ENCODE measurements at regions of chr4 and their contacts with region 1.

Region 1: DNA sequence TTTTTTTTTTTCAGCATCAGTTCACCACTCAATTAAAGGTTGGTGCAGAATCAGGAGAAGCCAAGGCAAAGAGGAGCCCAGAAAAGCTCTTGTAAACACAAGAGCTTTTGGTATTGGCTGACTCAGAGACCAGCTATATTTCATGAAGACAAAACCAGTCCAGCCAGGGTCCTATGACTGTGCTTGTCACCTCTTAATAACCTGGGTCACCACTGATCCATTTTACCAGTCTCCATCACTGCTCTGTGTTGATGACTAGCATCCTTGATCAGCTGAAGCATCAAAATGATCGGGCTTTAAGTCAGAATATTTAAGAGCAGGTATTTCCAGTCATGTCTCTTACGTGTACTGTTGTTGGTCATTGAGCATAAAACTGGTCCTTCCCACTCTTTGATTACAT is 237.9 kb downstream of the PACRGL start:
- DNase-seq: no peak
- ATAC-seq: no peak
- H3K4me3 Mint-ChIP-seq: no peak overlapping the region
- H3K27ac Mint-ChIP-seq: no peak overlapping the region
- H3K4me1 Mint-ChIP-seq: no peaks in the 10 kb centered on the region
- H3K27me3 Mint-ChIP-seq: no peaks in the 10 kb centered on the region
- CTCF ChIP-seq: no peak

Region 2: GRCh38 chr4:20916106-20916505 is 22.1 kb before region 1 on chr4:
- CTCF ChIA-PET with region 1: no interaction called
- POLR2A ChIA-PET with region 1: no interaction called
- DNase-seq: no peak
- ATAC-seq: no peak
- H3K4me3 Mint-ChIP-seq: no peak overlapping the region
- H3K27ac Mint-ChIP-seq: no peak overlapping the region
- H3K4me1 Mint-ChIP-seq: no peaks in the 10 kb centered on the region
- H3K27me3 Mint-ChIP-seq: no peaks in the 10 kb centered on the region
- CTCF ChIP-seq: no peak

Region 3: DNA sequence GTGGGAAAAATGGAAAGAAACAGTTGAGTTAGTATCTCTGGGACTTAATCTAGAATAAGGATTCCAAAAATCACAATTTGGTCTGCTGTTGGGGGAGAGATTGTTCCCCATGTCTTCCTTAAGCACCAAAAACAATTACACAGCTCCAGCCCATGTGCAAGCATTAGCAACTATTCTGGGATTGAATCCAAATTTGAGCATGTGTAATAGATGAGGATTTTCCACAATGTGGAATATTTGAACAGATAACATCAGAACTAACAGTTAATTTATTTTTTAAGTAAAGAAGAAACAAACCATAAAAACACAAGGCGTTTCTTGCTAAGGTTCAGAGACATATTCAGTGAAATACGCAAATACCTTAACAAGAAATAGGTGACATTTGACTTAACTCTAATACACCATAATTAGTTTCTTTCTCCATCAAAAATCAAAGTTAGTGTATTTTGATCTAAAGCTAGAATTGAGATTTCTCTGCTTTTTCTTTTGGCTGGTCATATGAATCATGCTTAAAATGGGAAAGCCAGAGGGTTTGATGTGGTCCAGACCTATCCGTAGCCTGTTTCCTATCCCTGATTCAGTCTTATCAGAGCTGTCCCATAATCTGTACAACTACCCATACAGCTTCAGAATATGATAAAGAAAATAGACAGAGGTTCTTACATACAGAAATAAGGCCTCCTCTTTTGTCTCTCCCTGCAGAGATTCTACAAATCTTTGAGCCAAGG is 175.5 kb after region 1 on chr4:
- CTCF ChIA-PET with region 1: no interaction called
- POLR2A ChIA-PET with region 1: interaction called, 12 read pairs
- DNase-seq: no peak
- ATAC-seq: no peak
- H3K4me3 Mint-ChIP-seq: no peak overlapping the region
- H3K27ac Mint-ChIP-seq: no peak overlapping the region
- H3K4me1 Mint-ChIP-seq: peaks cover 24% of the 10 kb centered on the region
- H3K27me3 Mint-ChIP-seq: no peaks in the 10 kb centered on the region
- CTCF ChIP-seq: no peak

Measured in WTC11 (cell line).